PC-3 (cell line): ENCODE measurements at regions of chr3 and their contacts with region 1.

Region 1: GRCh38 chr3:122258757-122259371 is 66.2 kb upstream of the CSTA start:
- DNase-seq: peak; percentile 81
- ATAC-seq: peak; percentile 88
- H3K4me3 ChIP-seq: no peak overlapping the region
- H3K27ac ChIP-seq: no peak overlapping the region
- H3K4me1 ChIP-seq: no peaks in the 10 kb centered on the region
- H3K27me3 ChIP-seq: peaks cover 51% of the 10 kb centered on the region
- CTCF ChIP-seq: peak; percentile 94

Region 2: DNA sequence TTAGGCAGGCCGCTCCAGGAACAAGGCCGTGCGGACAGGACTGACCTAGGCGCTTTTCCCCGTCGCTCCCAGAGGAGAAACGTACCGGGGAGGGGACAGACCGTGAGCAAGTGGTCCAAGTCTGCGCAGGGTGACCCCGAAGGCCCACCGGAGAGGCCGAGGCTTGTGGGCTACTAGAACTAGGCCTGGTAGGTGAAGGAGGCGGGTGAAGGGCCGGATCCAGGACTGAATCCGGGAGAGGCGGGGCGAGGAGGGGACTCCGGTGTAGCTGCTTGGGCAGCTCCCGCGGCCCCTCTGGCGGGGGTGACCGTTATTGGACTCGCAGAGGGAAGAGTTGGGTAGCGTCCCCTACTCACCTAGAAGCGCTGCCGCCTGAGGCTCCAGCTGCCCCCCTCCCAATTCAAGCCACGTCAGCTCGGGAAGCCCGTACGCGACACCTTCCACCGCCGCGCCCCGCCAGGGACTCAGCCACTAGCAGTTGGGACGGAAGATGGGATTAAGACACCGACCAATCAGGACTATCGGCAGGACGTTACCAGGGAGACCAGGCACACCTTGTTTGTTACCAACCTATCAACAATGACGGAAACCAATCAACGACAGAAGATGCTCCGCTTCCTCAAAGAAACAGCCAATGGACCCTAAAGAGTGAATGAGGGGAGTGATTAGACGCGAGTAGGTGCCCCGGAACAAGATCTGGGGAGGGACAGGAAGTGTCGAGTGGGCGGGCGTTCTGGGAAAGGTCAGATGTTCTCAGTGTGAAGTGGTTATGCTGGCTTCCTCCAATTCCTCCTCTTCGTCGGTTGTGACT is 509.4 kb before region 1 on chr3 and contains the start of gene GOLGB1:
- CTCF ChIA-PET with region 1: interaction called, 4 read pairs
- POLR2A ChIA-PET with region 1: no interaction called
- intact Hi-C with region 1: loop called (anchors 2 kb)
- DNase-seq: peak; percentile 100
- ATAC-seq: peak; percentile 94
- H3K4me3 ChIP-seq: peak within 1 kb of the TSS; percentile 86
- H3K27ac ChIP-seq: peak within 1 kb of the TSS; percentile 57
- H3K4me1 ChIP-seq: peaks cover 19% of the 10 kb centered on the region
- H3K27me3 ChIP-seq: no peaks in the 10 kb centered on the region
- CTCF ChIP-seq: no peak
- total RNA-seq, gene GOLGB1: 30.2 and 31.6 TPM in 2 replicates

Region 3: GRCh38 chr3:121883507-121883906 is 375.4 kb before region 1 on chr3:
- CTCF ChIA-PET with region 1: no interaction called
- POLR2A ChIA-PET with region 1: no interaction called
- intact Hi-C with region 1: loop called (anchors 1 kb)
- DNase-seq: peak; percentile 89
- ATAC-seq: peak; percentile 82
- H3K4me3 ChIP-seq: no peak overlapping the region
- H3K27ac ChIP-seq: no peak overlapping the region
- H3K4me1 ChIP-seq: peaks cover 9% of the 10 kb centered on the region; the same call in 1 of the 2 replicates
- H3K27me3 ChIP-seq: no peaks in the 10 kb centered on the region
- CTCF ChIP-seq: peak; percentile 95

Region 4: GRCh38 chr3:121995161-121996137 is 263.4 kb before region 1 on chr3:
- CTCF ChIA-PET with region 1: no interaction called
- POLR2A ChIA-PET with region 1: no interaction called
- intact Hi-C with region 1: loop called (anchors 5 kb)
- DNase-seq: peak; percentile 98
- ATAC-seq: peak; percentile 92
- H3K4me3 ChIP-seq: 0 out of 2 replicates have a peak overlapping the region, but pooled peaks have one; percentile 12
- H3K27ac ChIP-seq: peak overlapping the region; percentile 96
- H3K4me1 ChIP-seq: peaks cover 52% of the 10 kb centered on the region
- H3K27me3 ChIP-seq: no peaks in the 10 kb centered on the region
- CTCF ChIP-seq: peak; percentile 97

Region 5: GRCh38 chr3:122245513-122246174 is 13.2 kb before region 1 on chr3:
- CTCF ChIA-PET with region 1: interaction called, 14 read pairs
- POLR2A ChIA-PET with region 1: no interaction called
- intact Hi-C with region 1: no loop called
- DNase-seq: peak; percentile 27
- ATAC-seq: no peak
- H3K4me3 ChIP-seq: no peak overlapping the region
- H3K27ac ChIP-seq: no peak overlapping the region
- H3K4me1 ChIP-seq: no peaks in the 10 kb centered on the region
- H3K27me3 ChIP-seq: peaks cover 97% of the 10 kb centered on the region
- CTCF ChIP-seq: no peak

Region 6: DNA sequence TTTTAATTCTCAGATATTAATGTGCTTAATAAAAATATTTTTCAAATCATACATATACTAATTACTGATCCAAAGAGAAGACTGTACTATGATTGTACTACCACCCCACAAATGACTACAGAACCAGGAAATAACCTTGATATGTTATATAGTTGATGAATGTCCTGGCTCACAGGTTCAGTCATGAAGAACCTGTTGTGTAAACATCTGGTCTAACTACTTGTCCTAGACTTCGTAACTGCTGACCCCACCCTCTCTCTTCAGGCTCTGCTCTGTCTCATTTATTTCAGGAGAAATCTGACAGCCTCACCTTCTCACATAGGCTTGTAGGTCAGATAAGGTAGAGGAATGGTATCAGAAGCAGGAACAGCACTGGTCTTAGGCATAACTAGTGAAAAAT is 51.5 kb after region 1 on chr3:
- CTCF ChIA-PET with region 1: no interaction called
- POLR2A ChIA-PET with region 1: no interaction called
- intact Hi-C with region 1: no loop called
- DNase-seq: peak; percentile 30
- ATAC-seq: no peak
- H3K4me3 ChIP-seq: no peak overlapping the region
- H3K27ac ChIP-seq: no peak overlapping the region
- H3K4me1 ChIP-seq: peaks cover 16% of the 10 kb centered on the region
- H3K27me3 ChIP-seq: no peaks in the 10 kb centered on the region
- CTCF ChIP-seq: no peak